A673 (cell line): ENCODE measurements at regions of chr7 and their contacts with region 1.

Region 1: DNA sequence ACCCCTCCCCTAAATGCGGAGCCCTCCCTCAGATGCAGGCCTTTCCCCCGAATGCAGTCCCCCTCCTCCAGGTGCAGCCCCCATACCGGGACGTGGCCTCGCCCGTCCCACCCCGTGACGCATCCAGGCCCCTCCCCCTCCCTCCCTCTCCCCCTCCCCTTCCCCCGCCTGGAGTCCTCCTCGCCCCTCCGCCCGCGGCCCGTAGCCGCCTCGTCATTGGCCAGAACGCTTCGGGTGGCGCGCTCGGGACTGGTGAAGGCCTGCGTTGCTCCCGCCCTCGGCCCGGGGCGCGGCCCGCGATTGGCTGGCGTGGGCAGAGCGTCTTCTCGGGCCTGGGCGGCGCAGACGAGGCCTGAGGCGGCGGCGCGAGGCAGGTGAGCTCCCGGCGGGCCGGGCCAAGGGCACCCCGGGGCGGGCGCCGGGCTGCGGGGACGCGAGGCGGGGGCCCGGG is 16.0 kb upstream of the SUN1 start:
- DNase-seq: peak; percentile 99
- H3K4me3 ChIP-seq: peak overlapping the region; percentile 68
- H3K27ac ChIP-seq: peak overlapping the region; percentile 38
- H3K4me1 ChIP-seq: peaks cover 53% of the 10 kb centered on the region
- H3K27me3 ChIP-seq: no peaks in the 10 kb centered on the region
- CTCF ChIP-seq: no peak

Region 2: DNA sequence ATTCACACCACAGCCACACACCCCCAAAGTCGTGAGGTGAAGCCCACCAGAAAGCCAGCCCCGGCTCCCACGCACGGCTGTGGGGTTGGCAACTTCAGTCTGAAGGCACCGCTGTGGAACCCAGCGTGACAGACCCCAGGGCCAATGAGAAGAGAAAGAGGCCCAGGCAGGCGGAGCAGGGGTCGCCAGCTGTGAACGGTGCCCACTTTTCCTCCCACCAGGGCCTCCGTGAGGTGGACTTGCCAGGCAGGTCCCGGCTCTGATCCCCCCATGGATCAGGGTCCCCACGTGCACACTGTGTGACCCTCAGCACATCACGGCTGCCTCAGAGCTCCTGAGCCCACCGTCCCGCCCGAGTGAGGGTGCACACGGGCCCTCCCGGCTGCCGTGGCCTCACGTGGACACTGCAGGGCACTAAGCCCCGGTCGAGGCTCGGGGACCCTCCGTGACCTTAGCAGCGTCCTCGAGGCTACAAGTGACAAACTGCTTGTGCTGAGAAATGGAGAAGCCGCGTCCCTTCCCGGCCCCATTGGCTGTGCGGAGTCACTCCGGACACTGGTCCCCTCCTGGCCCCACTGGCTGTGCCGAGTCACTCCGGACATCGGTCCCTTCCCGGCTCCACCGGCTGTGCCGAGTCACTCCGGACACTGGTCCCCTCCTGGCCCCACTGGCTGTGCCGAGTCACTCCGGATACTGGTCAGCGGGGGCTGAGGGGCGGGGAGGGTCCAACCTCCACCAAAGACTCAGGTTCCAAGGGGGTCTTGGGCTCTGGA is 224.3 kb before region 1 on chr7:
- CTCF ChIA-PET with region 1: no interaction called
- POLR2A ChIA-PET with region 1: interaction called, 16 read pairs
- intact Hi-C with region 1: no loop called
- DNase-seq: no peak
- H3K4me3 ChIP-seq: no peak overlapping the region
- H3K27ac ChIP-seq: no peak overlapping the region
- H3K4me1 ChIP-seq: no peaks in the 10 kb centered on the region
- H3K27me3 ChIP-seq: no peaks in the 10 kb centered on the region
- CTCF ChIP-seq: no peak

Region 3: GRCh38 chr7:780081-780480 is 36.2 kb before region 1 on chr7:
- CTCF ChIA-PET with region 1: interaction called, 4 read pairs
- POLR2A ChIA-PET with region 1: interaction called, 5 read pairs
- intact Hi-C with region 1: loop called (anchors 2 kb)
- DNase-seq: no peak
- H3K4me3 ChIP-seq: no peak overlapping the region
- H3K27ac ChIP-seq: peak overlapping the region; percentile 43
- H3K4me1 ChIP-seq: peaks cover 63% of the 10 kb centered on the region
- H3K27me3 ChIP-seq: no peaks in the 10 kb centered on the region
- CTCF ChIP-seq: no peak

Region 4: GRCh38 chr7:1248143-1248915 is 432.0 kb after region 1 on chr7:
- CTCF ChIA-PET with region 1: no interaction called
- POLR2A ChIA-PET with region 1: interaction called, 13 read pairs
- intact Hi-C with region 1: no loop called
- DNase-seq: no peak
- H3K4me3 ChIP-seq: peak overlapping the region; percentile 41
- H3K27ac ChIP-seq: no peak overlapping the region
- H3K4me1 ChIP-seq: peaks cover 38% of the 10 kb centered on the region
- H3K27me3 ChIP-seq: peaks cover 48% of the 10 kb centered on the region
- CTCF ChIP-seq: no peak